ENCODE measurements at regions of chr2 and their contacts with region 1.

Region 1: DNA sequence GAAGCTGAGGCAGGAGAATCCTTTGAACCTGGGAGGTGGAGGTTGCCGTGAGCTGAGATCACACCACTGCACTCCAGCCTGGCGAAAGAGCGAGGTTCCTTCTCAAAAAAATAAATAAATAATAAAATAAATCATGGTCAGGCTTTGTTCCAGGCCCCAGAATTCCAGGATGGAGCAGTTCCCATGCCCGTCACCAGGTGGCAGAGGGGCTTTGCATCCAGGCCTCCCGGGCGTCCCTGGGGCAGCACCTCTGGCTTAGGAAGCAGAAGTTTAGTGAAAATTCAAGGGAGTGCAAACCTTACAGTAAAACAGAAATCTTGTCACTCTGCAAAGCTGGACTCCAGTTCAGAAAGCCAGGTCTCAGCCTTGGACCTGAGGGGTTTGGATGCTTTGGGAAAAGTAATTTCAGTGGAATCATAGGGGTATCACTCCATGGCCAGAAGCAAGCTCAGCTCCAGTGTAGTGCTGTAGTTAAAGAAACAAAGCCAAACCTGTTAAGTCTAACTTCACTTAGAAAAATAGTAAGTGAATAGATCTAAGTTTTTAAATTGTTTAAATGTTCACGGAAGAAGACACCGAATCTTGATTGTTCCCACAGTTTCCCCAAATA is 512.7 kb downstream of the CMPK2 start:
- DNase-seq: no peak
- H3K4me3 ChIP-seq: no peak overlapping the region
- CTCF ChIP-seq: peak; percentile 84

Region 2: DNA sequence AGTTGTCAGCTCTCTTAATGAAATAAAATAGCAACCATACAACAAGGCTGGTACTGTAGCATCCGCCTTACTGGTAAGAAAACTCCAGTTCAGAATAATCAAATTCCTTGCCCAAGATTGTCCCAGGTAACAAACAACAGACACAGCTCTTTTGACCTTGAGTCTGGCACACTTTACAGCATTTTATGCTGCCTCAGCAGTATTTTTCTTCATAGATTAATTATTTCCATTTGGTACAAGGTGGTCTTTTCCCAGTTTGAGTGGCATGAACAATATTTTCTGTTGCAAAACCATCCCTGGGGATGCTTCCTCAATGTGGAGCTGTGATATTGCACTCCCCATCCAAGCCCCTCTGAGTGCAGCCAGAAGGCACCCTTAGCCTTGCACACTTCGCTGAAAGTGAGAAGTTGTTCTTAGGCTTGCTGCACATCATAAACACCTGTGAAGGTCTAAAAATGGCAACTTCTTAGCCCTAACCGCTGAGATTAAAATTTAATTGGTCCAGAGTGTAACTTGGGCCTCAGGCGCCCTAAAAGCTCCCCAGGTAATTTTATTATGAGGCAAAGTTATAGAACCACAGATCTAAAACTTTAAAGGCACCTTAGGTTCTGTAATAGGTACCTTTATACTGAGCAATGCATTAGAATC is 10.6 kb before region 1 on chr2:
- CTCF ChIA-PET with region 1: interaction called, 18 read pairs
- POLR2A ChIA-PET with region 1: no interaction called
- DNase-seq: no peak
- H3K4me3 ChIP-seq: no peak overlapping the region
- CTCF ChIP-seq: no peak

Region 3: DNA sequence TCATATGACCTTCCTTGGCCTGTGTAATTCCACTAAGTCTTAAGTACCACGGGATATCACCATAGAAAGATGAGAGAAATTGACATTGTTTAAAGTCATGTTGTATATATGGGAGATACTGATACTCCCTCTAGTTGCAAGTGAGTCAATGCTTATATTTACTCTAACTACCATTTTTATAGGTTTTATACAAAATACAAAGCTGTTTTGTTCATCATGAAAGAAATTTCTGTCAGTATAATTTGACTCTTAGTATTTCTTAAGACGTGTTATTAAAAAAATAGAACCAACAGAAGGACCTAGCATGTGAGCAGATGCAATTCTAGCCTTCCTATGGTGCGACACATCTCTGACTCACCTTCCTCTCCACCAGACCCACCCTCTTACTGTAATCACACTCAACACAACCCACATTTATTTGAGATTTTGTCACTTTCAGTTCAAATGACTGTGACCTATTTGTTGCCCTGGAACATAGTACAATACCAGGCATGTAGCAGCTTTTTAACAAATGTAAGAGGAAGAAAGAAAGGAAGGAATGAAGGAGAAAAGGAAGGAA is 59.6 kb after region 1 on chr2:
- CTCF ChIA-PET with region 1: no interaction called
- POLR2A ChIA-PET with region 1: no interaction called
- DNase-seq: no peak
- H3K4me3 ChIP-seq: no peak overlapping the region
- CTCF ChIP-seq: no peak

Region 4: DNA sequence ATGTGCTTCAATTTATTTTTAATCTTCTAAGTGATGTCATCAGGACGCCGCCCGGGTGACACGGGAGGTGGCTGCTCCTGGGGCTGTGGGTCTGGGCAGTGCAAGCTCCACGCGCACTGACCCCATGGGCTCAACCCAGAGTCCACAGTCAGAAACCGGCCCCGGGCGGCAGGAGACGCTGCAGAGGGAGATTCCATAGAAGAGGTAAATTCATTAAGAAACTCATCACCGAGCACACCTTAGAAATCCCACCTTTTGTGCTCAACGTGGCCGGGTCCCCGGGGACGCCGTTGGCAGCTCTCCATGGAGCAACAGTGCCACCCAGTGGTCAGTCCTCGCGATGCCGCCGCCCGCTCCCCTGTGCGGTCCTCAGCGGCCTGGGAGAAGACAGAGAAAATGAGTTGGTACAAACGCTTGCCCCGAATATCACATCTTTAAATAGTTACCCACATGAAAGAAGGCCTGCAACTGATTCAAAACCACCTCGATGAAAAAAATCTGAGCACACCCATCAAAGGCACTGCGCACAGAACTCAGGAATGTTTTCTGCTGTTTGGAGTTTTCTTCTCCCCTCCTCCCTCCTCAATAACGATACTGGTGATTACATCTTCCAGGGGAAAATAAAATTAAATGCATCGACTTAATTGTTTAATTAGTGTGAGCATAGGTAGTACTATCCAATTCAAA is 420.1 kb after region 1 on chr2:
- CTCF ChIA-PET with region 1: interaction called, 30 read pairs
- POLR2A ChIA-PET with region 1: no interaction called
- DNase-seq: no peak
- H3K4me3 ChIP-seq: no peak overlapping the region
- CTCF ChIP-seq: peak; percentile 94